Transverse colon (tissue), 4 donors: ENCODE measurements at regions of chr2 and their contacts with region 1.

Region 1: GRCh38 chr2:238945433-238946150 is 97.7 kb downstream of the TWIST2 start:
- DNase-seq: peak; percentile 48
- H3K4me3 ChIP-seq: no peak overlapping the region
- H3K27ac ChIP-seq: no peak overlapping the region
- H3K4me1 ChIP-seq: no peaks in the 10 kb centered on the region
- H3K27me3 ChIP-seq: no peaks in the 10 kb centered on the region
- CTCF ChIP-seq: peak; percentile 49 to 70 (median 67)
- EP300 ChIP-seq: no peak
- POLR2A ChIP-seq: no peak

Region 2: GRCh38 chr2:238370823-238371372 is 574.7 kb before region 1 on chr2:
- in situ Hi-C with region 1: loop called in 1 of 4 experiments (anchors 25 kb)
- intact Hi-C with region 1: loop called (anchors 10 kb)
- DNase-seq: peak; percentile 67
- H3K4me3 ChIP-seq: no peak overlapping the region
- H3K27ac ChIP-seq: no peak overlapping the region
- H3K4me1 ChIP-seq: no peaks in the 10 kb centered on the region
- H3K27me3 ChIP-seq: no peaks in the 10 kb centered on the region
- CTCF ChIP-seq: peak; percentile 68 to 79 (median 72)
- EP300 ChIP-seq: no peak
- POLR2A ChIP-seq: no peak

Region 3: DNA sequence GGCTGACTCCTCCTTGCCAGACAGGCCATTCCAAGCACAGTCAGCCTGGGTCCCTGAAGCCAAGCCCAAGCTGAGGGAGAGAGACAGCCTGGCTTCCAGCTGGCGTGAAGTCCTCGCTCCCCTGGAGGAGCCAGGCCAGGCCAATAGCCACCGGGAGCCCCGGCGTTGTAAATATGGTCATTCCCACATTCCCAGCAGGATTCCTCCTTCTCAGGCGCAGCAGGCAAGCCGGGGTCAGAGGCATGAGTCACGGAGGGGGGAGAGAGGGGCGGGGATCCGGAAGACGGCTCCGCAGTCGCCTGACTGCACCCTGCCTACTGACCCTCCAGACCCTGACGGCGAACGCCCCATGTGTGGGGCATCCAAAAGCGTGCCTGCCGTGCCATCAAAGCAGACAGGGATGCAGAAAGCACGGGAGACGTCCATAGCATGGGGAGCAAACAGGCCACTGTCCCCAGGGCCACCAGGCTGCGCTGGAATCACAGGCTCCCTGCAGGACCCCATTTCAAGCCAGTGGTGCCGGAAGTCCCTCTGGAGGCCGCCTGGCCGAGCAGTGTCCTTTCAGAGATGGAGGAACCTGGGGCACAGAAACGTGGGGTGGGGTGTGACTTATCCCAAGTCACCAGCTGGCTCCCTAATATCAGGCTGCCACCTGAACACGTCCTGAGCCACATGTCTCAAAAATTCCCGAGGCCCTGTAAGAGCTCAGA is 49.5 kb before region 1 on chr2:
- in situ Hi-C with region 1: no loop called
- intact Hi-C with region 1: no loop called
- DNase-seq: peak; percentile 58
- H3K4me3 ChIP-seq: no peak overlapping the region
- H3K27ac ChIP-seq: peak overlapping the region; percentile 53 to 71 (median 64)
- H3K4me1 ChIP-seq: peaks cover 11 to 53% (median 14%) of the 10 kb centered on the region in 4 donors
- H3K27me3 ChIP-seq: no peaks in the 10 kb centered on the region
- CTCF ChIP-seq: no peak
- EP300 ChIP-seq: no peak
- POLR2A ChIP-seq: no peak